Caco-2 (cell line): ENCODE measurements at regions of chr3 and their contacts with region 1.

Region 1: DNA sequence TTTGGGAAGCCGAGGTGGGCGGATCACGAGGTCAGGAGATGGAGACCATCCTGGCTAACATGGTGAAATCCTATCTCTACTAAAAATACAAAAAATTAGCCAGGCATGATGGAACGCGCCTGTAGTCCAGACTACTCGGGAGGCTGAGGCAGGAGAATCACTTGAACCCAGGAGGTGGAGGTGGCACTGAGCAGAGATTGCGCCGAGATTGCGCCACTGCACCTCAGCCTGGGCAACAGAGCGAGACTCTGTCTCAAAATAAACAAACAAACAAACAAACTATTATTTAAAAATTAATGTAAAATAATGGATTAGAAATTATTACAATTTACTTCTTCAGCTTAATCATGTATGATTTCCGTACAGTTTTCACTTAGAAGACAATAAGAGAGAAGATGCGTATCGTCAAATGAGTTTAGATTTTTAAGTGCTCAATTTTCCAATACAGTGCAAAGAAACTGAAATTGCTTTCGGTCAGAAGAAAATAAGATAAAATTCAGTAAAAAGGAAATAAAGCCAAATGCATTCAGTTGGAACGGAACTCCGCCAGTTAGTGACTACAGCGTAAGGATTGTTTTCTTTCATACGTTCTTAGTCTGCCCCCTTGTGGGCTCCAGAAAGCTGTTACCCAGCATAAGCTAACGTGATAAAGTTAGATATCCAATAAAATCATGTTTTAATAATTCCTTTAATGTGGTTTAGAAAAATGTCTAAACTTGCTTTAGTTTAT is 24.8 kb downstream of the AADAC start:
- DNase-seq: peak; percentile 49 to 60
- H3K4me3 ChIP-seq: no peak overlapping the region
- H3K4me3 Mint-ChIP-seq: no peak overlapping the region
- H3K27ac Mint-ChIP-seq: no peak overlapping the region
- H3K4me1 ChIP-seq: peaks cover 20% of the 10 kb centered on the region
- H3K4me1 Mint-ChIP-seq: peaks cover 15% of the 10 kb centered on the region
- H3K27me3 ChIP-seq: no peaks in the 10 kb centered on the region
- H3K27me3 Mint-ChIP-seq: no peaks in the 10 kb centered on the region
- CTCF ChIP-seq: peak; percentile 66 to 79

Region 2: GRCh38 chr3:151290673-151291072 is 548.1 kb before region 1 on chr3:
- CTCF ChIA-PET with region 1: no interaction called
- POLR2A ChIA-PET with region 1: no interaction called
- intact Hi-C with region 1: loop called (anchors 5 kb)
- DNase-seq: no peak
- H3K4me3 ChIP-seq: no peak overlapping the region
- H3K4me3 Mint-ChIP-seq: no peak overlapping the region
- H3K27ac Mint-ChIP-seq: no peak overlapping the region
- H3K4me1 ChIP-seq: peaks cover 5% of the 10 kb centered on the region; the same call in 1 of the 2 replicates
- H3K4me1 Mint-ChIP-seq: no peaks in the 10 kb centered on the region
- H3K27me3 ChIP-seq: no peaks in the 10 kb centered on the region
- H3K27me3 Mint-ChIP-seq: no peaks in the 10 kb centered on the region
- CTCF ChIP-seq: peak in 1 of 2 experiments; percentile 26

Region 3: GRCh38 chr3:151439652-151440129 is 399.1 kb before region 1 on chr3:
- CTCF ChIA-PET with region 1: interaction called, 30 read pairs
- POLR2A ChIA-PET with region 1: no interaction called
- intact Hi-C with region 1: loop called (anchors 1 kb)
- DNase-seq: peak in 1 of 2 experiments; percentile 74
- H3K4me3 ChIP-seq: no peak overlapping the region
- H3K4me3 Mint-ChIP-seq: no peak overlapping the region
- H3K27ac Mint-ChIP-seq: no peak overlapping the region
- H3K4me1 ChIP-seq: no peaks in the 10 kb centered on the region
- H3K4me1 Mint-ChIP-seq: no peaks in the 10 kb centered on the region
- H3K27me3 ChIP-seq: no peaks in the 10 kb centered on the region
- H3K27me3 Mint-ChIP-seq: no peaks in the 10 kb centered on the region
- CTCF ChIP-seq: peak; percentile 57 to 83

Region 4: DNA sequence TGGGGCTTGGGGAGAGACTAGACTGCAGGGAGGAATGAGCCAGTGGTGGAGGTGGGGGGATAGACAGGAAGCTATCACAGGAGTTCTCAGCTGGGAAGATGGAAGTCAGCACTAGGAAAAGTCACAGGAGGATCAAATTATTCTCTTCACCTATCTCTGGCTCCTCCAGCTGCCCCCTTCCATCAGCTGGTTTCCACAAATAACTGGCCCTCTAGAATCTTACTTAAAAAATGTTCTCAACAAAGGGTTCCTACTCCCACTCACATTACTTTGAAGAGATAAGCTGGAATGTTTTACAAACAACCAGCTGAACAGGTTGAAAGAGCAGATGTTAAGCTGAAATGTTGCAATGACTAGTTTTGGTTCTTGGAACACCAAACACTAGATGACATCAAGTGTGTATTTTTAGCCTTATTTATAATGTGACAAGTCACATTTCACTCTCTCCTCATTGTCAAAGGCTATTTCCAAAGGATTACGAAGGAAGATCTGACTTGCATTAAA is 207.8 kb before region 1 on chr3:
- CTCF ChIA-PET with region 1: no interaction called
- POLR2A ChIA-PET with region 1: no interaction called
- intact Hi-C with region 1: loop called (anchors 10 kb)
- DNase-seq: peak; percentile 51 to 69
- H3K4me3 ChIP-seq: no peak overlapping the region
- H3K4me3 Mint-ChIP-seq: peak overlapping the region; percentile 37
- H3K27ac Mint-ChIP-seq: peak overlapping the region; percentile 91
- H3K4me1 ChIP-seq: peaks cover 39% of the 10 kb centered on the region
- H3K4me1 Mint-ChIP-seq: peaks cover 21% of the 10 kb centered on the region
- H3K27me3 ChIP-seq: no peaks in the 10 kb centered on the region
- H3K27me3 Mint-ChIP-seq: no peaks in the 10 kb centered on the region
- CTCF ChIP-seq: no peak

Region 5: DNA sequence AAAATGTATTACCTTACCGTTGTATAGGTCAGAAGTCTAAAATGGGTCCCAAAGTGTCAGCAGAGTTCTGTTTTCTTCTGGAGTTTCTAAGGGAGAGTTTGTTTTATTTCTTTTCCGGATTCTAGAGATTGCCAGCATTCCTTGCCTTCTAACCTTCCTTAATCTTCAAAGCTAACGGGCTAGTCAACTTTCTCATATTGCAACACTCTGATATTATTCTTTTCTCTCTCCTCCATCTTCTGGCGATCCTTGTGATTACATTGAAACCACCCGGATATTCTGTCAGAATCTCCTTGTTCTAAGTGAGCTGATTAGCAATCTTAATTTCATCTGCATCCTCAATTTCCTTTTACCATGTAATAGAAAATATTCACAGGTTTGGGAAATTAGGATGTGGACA is 141.3 kb before region 1 on chr3:
- CTCF ChIA-PET with region 1: interaction called, 3 read pairs
- POLR2A ChIA-PET with region 1: no interaction called
- intact Hi-C with region 1: loop called (anchors 5 kb)
- DNase-seq: peak in 1 of 2 experiments; percentile 28
- H3K4me3 ChIP-seq: no peak overlapping the region
- H3K4me3 Mint-ChIP-seq: no peak overlapping the region
- H3K27ac Mint-ChIP-seq: no peak overlapping the region
- H3K4me1 ChIP-seq: no peaks in the 10 kb centered on the region
- H3K4me1 Mint-ChIP-seq: peaks cover 7% of the 10 kb centered on the region
- H3K27me3 ChIP-seq: no peaks in the 10 kb centered on the region
- H3K27me3 Mint-ChIP-seq: no peaks in the 10 kb centered on the region
- CTCF ChIP-seq: no peak

Region 6: GRCh38 chr3:151787626-151788025 is 51.1 kb before region 1 on chr3:
- CTCF ChIA-PET with region 1: no interaction called
- POLR2A ChIA-PET with region 1: no interaction called
- intact Hi-C with region 1: loop called (anchors 1 kb)
- DNase-seq: no peak
- H3K4me3 ChIP-seq: no peak overlapping the region
- H3K4me3 Mint-ChIP-seq: no peak overlapping the region
- H3K27ac Mint-ChIP-seq: no peak overlapping the region
- H3K4me1 ChIP-seq: peaks cover 41% of the 10 kb centered on the region
- H3K4me1 Mint-ChIP-seq: peaks cover 16% of the 10 kb centered on the region
- H3K27me3 ChIP-seq: no peaks in the 10 kb centered on the region
- H3K27me3 Mint-ChIP-seq: no peaks in the 10 kb centered on the region
- CTCF ChIP-seq: no peak

Region 7: DNA sequence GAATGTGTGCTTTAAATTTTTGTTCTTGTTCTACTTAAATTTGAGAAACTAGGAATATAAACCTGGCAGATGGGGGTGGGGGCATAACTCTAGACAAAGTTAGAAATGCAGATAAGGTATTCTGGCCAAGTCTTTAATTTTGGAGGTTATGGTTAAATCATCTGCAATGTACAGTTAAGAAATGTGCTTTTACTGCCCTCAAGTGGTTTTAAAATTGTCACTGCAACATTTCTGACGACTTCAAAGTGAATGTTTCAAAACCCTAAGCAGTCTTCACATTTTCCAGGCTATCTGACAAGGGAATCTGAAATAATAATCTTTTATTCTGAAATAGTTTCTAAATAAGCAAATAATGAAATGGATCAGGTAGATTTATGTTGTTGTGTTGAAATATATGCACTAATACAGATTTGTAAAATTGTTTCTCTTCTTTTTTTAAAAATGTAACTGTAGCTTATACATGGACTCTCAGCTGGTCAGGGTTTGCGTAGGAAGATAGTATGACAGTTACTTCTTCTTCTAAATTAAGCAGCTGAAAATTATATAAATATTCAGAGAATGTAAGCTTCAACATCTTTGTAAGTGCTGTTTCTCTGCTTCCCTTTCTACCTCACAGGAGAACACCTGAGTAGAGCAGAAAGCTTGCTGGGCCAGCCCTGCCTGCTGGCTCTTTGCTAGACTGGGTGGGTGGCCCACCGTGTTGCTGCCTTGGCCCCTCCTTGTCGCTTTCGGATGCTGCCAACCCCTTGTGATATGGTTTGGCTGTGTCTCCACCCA is 79.7 kb after region 1 on chr3:
- CTCF ChIA-PET with region 1: interaction called, 5 read pairs
- POLR2A ChIA-PET with region 1: no interaction called
- intact Hi-C with region 1: loop called (anchors 1 kb)
- DNase-seq: peak in 1 of 2 experiments; percentile 24
- H3K4me3 ChIP-seq: no peak overlapping the region
- H3K4me3 Mint-ChIP-seq: no peak overlapping the region
- H3K27ac Mint-ChIP-seq: peak overlapping the region; percentile 39
- H3K4me1 ChIP-seq: no peaks in the 10 kb centered on the region
- H3K4me1 Mint-ChIP-seq: peaks cover 6% of the 10 kb centered on the region
- H3K27me3 ChIP-seq: no peaks in the 10 kb centered on the region
- H3K27me3 Mint-ChIP-seq: no peaks in the 10 kb centered on the region
- CTCF ChIP-seq: peak; percentile 48 to 62